H1 (cell line): ENCODE measurements at regions of chr10 and their contacts with region 1.

Region 1: GRCh38 chr10:78231939-78232338 is 198.3 kb downstream of the RPS24 start:
- DNase-seq: no peak
- H3K4me3 ChIP-seq: no peak overlapping the region
- H3K27ac ChIP-seq: no peak overlapping the region
- H3K4me1 ChIP-seq: no peaks in the 10 kb centered on the region
- H3K27me3 ChIP-seq: no peaks in the 10 kb centered on the region; a peak in 1 of 7 replicates
- CTCF ChIP-seq: peak in 2 of 3 experiments; percentile 30 to 52; a peak in 2 of 4 replicates
- EP300 ChIP-seq: no peak
- POLR2A ChIP-seq: no peak
- RAD21 ChIP-seq: peak; percentile 44 to 65

Region 2: DNA sequence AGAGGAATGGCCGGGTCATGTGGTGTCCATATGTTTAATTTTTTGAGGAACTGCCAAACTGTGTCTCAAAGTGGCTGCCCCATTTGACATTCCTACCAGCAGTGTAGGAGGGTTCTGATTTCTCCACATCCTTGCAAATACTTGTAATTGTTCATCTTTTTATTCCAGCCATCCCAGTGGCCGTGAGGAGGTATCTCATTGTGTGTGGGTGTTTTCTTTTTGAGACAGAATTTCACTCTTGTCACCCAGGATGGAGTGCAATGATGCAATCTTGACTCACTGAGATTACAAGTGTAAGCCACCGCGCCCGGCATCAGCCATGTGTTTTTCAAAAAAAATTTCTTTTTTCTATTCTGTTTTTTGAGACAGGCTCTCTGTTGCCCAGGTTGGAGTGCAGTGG is 266.6 kb before region 1 on chr10:
- CTCF ChIA-PET with region 1: no interaction called
- POLR2A ChIA-PET with region 1: no interaction called
- DNase-seq: no peak
- H3K4me3 ChIP-seq: no peak overlapping the region
- H3K27ac ChIP-seq: no peak overlapping the region
- H3K4me1 ChIP-seq: peaks cover 0 to 6% (median 0%) of the 10 kb centered on the region in 4 experiments; a peak in 1 of 7 replicates
- H3K27me3 ChIP-seq: no peaks in the 10 kb centered on the region
- CTCF ChIP-seq: no peak
- EP300 ChIP-seq: no peak
- POLR2A ChIP-seq: no peak
- RAD21 ChIP-seq: no peak

Region 3: DNA sequence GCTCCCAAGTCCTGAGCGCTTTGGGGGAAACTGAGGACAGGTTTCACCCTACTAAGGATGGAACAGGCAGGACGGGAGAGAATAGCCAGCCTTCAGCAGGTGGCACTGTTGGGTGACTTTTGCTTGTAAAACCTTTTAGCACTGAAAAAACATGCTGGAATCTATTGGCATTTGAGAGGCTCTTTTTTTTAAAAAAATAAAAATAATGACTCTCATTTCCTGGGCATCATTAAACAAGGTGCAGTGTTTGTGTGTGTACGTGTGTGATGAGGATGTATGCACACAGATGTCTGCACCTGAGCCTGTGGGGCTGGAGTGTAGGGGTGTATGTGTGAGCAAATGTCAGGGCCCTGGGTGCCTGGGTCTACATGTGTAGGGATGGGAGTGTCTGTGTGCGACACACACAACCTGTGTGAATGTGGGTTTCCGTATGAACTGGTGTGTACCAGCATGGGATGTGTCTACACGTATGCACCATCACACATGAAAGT is 20.3 kb before region 1 on chr10:
- CTCF ChIA-PET with region 1: interaction called, 60 read pairs
- POLR2A ChIA-PET with region 1: interaction called, 4 read pairs
- DNase-seq: no peak
- H3K4me3 ChIP-seq: no peak overlapping the region
- H3K27ac ChIP-seq: no peak overlapping the region
- H3K4me1 ChIP-seq: no peaks in the 10 kb centered on the region; a peak in 1 of 7 replicates
- H3K27me3 ChIP-seq: no peaks in the 10 kb centered on the region
- CTCF ChIP-seq: peak; percentile 46 to 53 (median 47)
- EP300 ChIP-seq: no peak
- POLR2A ChIP-seq: no peak
- RAD21 ChIP-seq: peak; percentile 69 to 74

Region 4: GRCh38 chr10:78263521-78263988 is 31.6 kb after region 1 on chr10:
- CTCF ChIA-PET with region 1: interaction called, 16 read pairs
- POLR2A ChIA-PET with region 1: no interaction called
- DNase-seq: no peak
- H3K4me3 ChIP-seq: no peak overlapping the region
- H3K27ac ChIP-seq: no peak overlapping the region
- H3K4me1 ChIP-seq: 0 out of 7 replicates have a peak, but pooled peaks cover 0 to 2% (median 0%) of the 10 kb centered on the region in 4 experiments
- H3K27me3 ChIP-seq: no peaks in the 10 kb centered on the region
- CTCF ChIP-seq: no peak
- EP300 ChIP-seq: no peak
- POLR2A ChIP-seq: no peak
- RAD21 ChIP-seq: no peak

Region 5: DNA sequence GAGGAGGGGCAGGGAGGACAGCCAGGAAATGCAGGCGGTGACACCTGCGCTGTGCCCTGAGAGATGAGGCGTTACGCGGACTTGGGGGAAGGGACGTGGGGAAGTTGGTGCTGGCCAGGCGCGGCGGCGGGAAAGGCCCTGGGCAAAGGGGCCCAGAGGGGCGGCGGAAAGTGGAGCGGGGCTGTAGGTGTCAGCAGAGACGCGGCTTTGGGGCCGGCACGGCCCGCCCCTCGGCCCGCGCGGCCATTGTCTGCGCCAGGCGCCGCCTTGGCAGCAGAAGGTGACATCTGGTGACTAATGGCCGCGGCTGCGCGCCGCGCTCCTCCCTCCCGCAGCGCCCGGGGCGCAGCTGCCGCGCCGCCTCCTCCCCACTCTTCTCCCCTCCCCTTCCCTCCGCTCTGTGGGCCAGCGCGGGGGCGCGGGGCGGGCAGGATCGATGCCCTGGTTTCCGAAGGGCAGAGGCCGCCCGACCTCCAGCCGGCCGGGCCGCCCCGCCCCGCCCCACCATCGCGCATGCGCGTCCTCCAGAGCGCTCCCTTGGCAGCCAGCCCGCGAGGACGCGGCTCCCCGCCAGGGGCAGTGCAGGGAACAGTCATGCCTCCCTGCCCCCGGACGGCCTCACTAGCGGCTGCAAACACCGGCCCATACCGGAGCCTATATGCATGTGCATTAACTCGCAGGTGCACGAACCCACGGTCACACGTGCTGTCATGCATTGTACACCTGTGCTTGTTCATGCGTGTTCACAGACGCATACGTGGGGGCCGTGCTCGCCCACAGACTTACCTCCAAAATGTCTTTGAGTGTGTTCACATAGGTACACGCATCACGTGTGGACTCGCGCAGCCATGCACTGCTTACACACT is 71.3 kb after region 1 on chr10:
- CTCF ChIA-PET with region 1: interaction called, 20 read pairs
- POLR2A ChIA-PET with region 1: no interaction called
- DNase-seq: peak; percentile 77 to 97
- H3K4me3 ChIP-seq: peak overlapping the region; percentile 46 to 65 (median 53)
- H3K27ac ChIP-seq: peak overlapping the region; percentile 37; the same call in 1 of the 2 replicates
- H3K4me1 ChIP-seq: peaks cover 7 to 10% (median 7%) of the 10 kb centered on the region in 4 experiments
- H3K27me3 ChIP-seq: 0 out of 7 replicates have a peak, but pooled peaks cover 0 to 3% (median 0%) of the 10 kb centered on the region in 4 experiments
- CTCF ChIP-seq: peak; percentile 71 to 94 (median 79)
- EP300 ChIP-seq: no peak
- POLR2A ChIP-seq: peak; percentile 56 to 88
- RAD21 ChIP-seq: peak; percentile 65 to 74